ENCODE measurements at regions of chr6 and their contacts with region 1.

Region 1: DNA sequence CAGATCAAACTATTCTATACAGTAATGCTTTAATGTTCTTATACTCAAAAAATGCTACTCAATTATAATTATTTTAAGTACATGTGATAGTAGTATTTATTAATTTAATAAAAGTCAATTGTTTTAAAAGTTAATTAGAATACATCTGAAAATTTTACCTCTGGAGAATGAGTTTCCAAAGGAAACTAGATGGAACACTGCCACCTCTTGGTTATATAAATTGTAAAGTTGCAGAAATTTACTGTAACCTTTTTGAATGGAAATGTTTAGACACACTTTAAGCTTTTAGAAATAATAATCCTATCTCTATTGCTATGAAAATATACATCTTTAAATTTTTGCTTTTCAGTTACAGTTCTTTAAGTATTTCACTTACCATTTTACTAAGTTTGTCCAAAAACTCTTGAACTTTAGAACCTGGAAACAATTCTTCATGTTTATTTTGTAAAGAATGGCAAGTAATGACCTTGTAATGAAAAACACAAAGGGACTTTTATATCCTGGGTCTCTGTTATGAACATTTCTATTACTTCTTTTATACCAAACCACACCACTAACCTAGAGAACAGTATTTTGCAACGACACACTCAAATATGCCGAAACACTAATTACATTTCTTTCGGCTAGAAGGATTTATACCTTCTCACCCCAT is 10.9 kb upstream of the BMP5 start:
- DNase-seq: no peak
- ATAC-seq: no peak
- H3K4me3 ChIP-seq: no peak overlapping the region
- H3K27ac ChIP-seq: no peak overlapping the region
- H3K4me1 ChIP-seq: no peaks in the 10 kb centered on the region
- H3K27me3 ChIP-seq: no peaks in the 10 kb centered on the region
- CTCF ChIP-seq: peak in 1 of 5 experiments; percentile 12
- POLR2A ChIP-seq: no peak

Region 2: DNA sequence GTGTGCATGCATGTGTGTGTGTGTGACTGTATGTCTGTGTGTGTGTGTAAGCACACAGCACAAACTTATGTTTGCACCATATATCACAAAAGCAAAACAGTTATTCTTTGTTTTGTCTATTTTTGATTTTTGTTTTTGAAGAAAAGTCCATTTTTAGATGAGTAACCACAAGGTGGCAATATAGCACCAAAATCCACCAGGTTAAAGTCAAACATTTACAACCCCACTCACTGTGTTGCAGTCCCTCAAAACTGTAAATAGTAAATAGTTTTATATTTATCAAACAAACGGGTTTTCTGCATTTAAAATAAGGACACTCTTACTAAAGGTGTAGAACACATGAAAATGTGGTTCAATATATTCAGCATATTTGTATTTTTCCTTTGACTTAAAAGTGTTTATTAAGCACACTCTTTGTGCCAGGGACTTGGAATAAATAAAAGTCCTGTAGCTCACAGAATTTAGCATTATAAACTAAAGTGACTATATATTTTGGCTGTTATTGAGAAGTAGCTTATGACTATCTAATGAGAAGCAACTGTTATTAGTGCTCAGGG is 440.6 kb before region 1 on chr6:
- in situ Hi-C with region 1: loop called in 3 of 4 experiments (anchors 10 to 25 kb)
- intact Hi-C with region 1: loop called (anchors 5 kb)
- DNase-seq: no peak
- ATAC-seq: no peak
- H3K4me3 ChIP-seq: no peak overlapping the region
- H3K27ac ChIP-seq: no peak overlapping the region
- H3K4me1 ChIP-seq: no peaks in the 10 kb centered on the region
- H3K27me3 ChIP-seq: peaks cover 0 to 3% (median 0%) of the 10 kb centered on the region in 3 donors
- CTCF ChIP-seq: peak in 4 of 5 experiments; percentile 17 to 37 (median 32)
- POLR2A ChIP-seq: no peak

Region 3: DNA sequence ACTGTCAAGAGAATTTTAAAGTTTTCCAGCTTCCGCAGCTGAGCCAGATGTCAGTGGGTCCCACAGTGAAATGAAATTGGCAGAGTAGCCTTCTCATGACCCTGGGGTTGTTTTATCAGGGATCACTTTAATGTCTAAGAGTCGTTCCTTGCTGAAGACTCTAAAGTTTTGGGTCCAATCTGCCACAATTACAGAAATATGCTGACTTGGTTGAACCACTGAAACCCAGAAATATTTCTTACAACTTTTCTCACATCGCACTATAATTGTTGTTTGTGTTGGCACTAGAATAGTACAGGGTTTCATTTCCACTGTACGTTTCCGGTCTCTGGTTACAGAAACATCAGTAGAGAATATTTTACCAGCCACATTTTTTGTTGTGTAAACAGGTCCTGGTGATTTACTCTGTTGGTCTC is 416.4 kb before region 1 on chr6:
- in situ Hi-C with region 1: loop called in 1 of 4 experiments (anchors 25 kb)
- intact Hi-C with region 1: no loop called
- DNase-seq: no peak
- ATAC-seq: no peak
- H3K4me3 ChIP-seq: no peak overlapping the region
- H3K27ac ChIP-seq: peak overlapping the region in 1 of 4 donors; percentile 20
- H3K4me1 ChIP-seq: no peaks in the 10 kb centered on the region
- H3K27me3 ChIP-seq: no peaks in the 10 kb centered on the region
- CTCF ChIP-seq: no peak
- POLR2A ChIP-seq: no peak

Region 4: DNA sequence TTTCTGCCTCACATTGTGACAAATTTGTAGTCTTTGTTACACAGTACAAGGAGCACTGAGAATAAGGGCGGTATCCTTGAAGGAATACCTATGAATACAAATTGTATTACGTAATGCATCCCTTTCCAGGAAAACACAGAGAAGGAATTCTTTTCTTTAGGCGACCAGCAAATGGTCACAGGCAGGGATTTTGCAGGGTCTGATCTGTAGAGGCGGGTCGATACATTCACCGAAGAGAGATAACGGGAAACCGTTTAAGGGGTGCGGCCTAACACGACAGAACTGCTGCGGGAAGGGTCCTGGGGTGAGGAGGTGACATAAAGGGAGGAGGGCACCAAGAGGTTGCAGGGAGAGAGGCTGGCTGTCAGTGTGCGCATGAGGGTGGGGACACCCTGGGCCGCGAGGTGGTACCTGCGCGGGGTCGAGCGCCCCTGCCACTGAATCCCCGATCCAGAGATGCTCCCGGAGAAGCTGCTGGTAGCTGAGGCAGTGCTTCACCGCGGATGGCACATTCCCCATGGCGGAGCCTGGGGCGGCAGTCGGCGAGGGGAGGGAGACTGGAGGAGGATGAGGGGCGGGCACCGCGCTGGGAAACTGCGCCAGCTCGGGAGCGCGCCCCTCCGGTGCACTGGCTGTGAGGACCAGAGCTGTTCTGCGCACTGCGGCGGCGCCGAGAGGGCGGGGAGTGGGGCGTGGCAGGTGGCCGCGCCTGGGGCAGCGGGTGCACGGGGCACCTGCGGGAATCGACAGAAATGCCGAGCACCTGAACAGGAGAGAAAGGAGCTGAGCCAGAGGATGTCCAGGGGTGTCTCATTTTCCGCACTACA is 307.6 kb before region 1 on chr6 and contains the start of gene HMGCLL1:
- in situ Hi-C with region 1: no loop called
- intact Hi-C with region 1: loop called (anchors 5 kb)
- DNase-seq: peak in 1 of 2 donors; percentile 20
- ATAC-seq: no peak
- H3K4me3 ChIP-seq: peak within 1 kb of the TSS; percentile 38 to 57 (median 48)
- H3K27ac ChIP-seq: peak within 1 kb of the TSS; percentile 59 to 66 (median 62)
- H3K4me1 ChIP-seq: no peaks in the 10 kb centered on the region
- H3K27me3 ChIP-seq: no peaks in the 10 kb centered on the region
- CTCF ChIP-seq: no peak
- POLR2A ChIP-seq: peak in 1 of 2 donors; percentile 16
- total RNA-seq, gene HMGCLL1: 0.53 to 3.6 (median 1.2) TPM